ENCODE measurements at regions of chr12 and their contacts with region 1.

Region 1: DNA sequence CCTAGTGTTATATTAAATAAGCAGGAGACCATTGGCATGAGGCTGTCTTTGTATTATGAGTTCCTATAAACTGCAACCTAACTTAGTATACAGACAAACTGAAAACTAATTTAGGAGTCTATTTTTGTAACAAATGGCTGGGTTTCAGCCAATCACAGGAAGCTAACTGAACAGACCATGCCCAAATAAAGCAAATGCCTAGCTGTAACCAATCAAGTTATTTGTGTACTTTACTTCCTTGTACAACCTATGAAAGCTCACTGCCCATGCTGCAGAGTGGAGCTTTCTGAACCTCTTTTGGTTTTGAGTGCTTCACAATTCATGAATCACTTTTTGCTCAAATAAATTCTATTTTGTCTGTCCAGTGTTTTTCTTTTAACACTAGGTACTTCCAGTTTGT is 41.6 kb downstream of the GUCY2C start:
- DNase-seq: no peak
- ATAC-seq: no peak
- H3K4me3 ChIP-seq: no peak overlapping the region
- H3K27ac ChIP-seq: no peak overlapping the region
- H3K4me1 ChIP-seq: no peaks in the 10 kb centered on the region
- H3K27me3 ChIP-seq: no peaks in the 10 kb centered on the region
- CTCF ChIP-seq: no peak
- POLR2A ChIP-seq: no peak
- RAD21 ChIP-seq: no peak

Region 2: DNA sequence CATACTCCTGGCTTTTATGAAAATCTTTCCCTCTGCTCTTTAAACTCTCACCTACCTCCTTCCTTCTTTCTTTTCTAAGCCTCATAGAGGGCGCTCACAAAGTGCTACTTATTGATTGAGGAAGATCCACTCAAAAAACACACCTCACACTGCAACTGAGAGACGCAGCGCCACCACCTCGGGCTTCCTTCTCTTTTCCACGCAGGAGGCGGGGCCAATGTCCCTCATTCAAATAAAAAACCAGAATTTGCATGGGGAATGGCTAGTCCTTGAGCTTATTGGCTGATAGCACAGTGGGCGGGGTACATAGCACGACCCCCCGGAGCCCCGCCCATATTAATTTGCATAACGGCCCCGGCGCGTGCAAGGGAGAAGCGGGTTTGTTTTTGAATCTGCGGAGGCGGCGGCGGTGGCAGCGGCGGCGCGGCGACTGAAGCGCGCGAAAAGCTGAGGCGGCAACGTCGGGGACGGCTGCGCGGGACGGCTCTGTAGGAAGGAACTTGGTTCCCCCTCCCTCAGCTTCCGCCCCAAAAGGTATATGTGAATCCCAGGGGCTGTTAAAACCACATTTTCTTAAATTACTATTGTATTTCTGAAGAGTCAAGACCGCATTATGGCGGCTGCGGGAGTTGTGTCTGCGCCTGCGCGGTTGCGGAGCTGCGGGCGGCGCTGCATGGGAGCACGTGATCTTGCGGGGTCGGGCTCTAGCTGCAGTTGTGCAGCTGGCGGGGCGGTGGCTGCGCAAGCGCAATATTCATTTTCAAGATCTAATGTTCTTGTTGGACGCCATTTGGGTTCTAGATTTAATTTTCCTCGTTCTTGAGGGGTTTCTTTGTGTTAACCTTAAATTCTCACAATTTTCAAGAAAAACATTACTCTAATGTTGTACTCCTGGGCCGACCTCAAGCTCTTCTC is 289.3 kb before region 1 on chr12 and contains the start of gene ATF7IP:
- CTCF ChIA-PET with region 1: no interaction called
- POLR2A ChIA-PET with region 1: no interaction called
- RAD21 ChIA-PET with region 1: no interaction called
- intact Hi-C with region 1: no loop called
- DNase-seq: peak; percentile 90
- ATAC-seq: peak; percentile 96
- H3K4me3 ChIP-seq: peak within 1 kb of the TSS; percentile 50 to 51
- H3K27ac ChIP-seq: peak within 1 kb of the TSS; percentile 99
- H3K4me1 ChIP-seq: peaks cover 2 to 25% of the 10 kb centered on the region in 2 experiments; a peak in 3 of 4 replicates
- H3K27me3 ChIP-seq: no peaks in the 10 kb centered on the region
- CTCF ChIP-seq: peak; percentile 15 to 41 (median 36); a peak in 3 of 6 replicates
- POLR2A ChIP-seq: no peak
- RAD21 ChIP-seq: peak; percentile 35
- total RNA-seq, gene ATF7IP: 38.6 TPM

Region 3: DNA sequence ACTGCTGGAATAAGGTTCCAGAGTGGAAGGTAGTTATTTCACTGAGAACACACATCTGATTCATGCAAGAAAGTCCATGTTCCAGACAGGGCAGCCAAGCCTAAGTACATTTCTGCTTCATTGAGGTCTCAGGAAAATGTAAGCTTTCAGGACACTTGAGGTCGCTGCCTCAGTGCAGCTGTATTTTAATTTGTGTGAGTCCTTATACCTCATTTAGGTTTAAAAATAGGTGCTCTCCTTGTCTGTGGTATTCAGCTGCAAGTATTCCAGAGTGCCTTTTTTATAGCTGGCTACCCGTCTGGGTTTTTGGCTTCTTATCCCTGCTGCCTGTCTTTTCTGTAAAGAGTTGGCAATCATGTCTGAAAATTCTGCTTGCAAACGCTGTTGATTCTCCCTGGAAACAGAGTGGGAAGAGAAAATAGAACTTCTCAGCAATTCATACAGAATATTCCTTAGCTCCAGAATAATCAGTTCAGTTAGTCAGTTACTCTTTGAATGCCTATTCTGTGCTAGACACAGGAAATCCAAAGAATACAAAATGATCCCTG is 41.9 kb before region 1 on chr12:
- CTCF ChIA-PET with region 1: no interaction called
- POLR2A ChIA-PET with region 1: no interaction called
- RAD21 ChIA-PET with region 1: no interaction called
- intact Hi-C with region 1: loop called (anchors 1 kb)
- DNase-seq: no peak
- ATAC-seq: no peak
- H3K4me3 ChIP-seq: no peak overlapping the region
- H3K27ac ChIP-seq: no peak overlapping the region
- H3K4me1 ChIP-seq: no peaks in the 10 kb centered on the region
- H3K27me3 ChIP-seq: no peaks in the 10 kb centered on the region
- CTCF ChIP-seq: no peak
- POLR2A ChIP-seq: no peak
- RAD21 ChIP-seq: no peak

Measured in HCT116 (cell line).